ENCODE measurements at regions of chr5 and their contacts with region 1.

Region 1: GRCh38 chr5:153964880-153965645 is 73.6 kb downstream of the FAM114A2 start:
- DNase-seq: peak; percentile 81
- CTCF ChIP-seq: peak; percentile 72

Region 2: DNA sequence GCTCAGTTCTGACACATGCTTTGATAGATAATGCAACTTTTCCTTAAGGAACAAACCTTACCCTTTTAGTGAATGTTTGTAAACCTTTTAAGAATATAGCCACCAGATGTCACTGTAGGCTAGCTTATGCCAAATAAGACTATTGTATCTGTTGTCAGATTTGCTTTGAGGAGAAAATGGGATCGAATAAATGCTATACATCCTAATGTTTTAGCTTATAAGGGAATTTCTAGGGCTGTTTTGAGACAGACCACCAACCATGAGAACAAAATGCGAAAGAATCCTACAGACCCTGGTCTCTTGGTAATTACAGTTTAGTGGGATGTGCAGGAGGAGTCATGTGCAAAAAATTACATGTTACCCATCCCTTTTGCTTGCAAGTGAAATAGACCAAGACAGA is 1432.3 kb before region 1 on chr5:
- in situ Hi-C with region 1: loop called (anchors 25 kb)
- DNase-seq: no peak
- CTCF ChIP-seq: peak; percentile 22

Region 3: GRCh38 chr5:153523831-153524230 is 441.2 kb before region 1 on chr5:
- in situ Hi-C with region 1: loop called (anchors 25 kb)
- DNase-seq: no peak
- CTCF ChIP-seq: no peak

Region 4: GRCh38 chr5:154647114-154647760 is 682.2 kb after region 1 on chr5:
- in situ Hi-C with region 1: no loop called
- DNase-seq: peak; percentile 71
- CTCF ChIP-seq: no peak

Measured in GM13976 (cell line).